ENCODE measurements at regions of chr4 and their contacts with region 1.

Region 1: DNA sequence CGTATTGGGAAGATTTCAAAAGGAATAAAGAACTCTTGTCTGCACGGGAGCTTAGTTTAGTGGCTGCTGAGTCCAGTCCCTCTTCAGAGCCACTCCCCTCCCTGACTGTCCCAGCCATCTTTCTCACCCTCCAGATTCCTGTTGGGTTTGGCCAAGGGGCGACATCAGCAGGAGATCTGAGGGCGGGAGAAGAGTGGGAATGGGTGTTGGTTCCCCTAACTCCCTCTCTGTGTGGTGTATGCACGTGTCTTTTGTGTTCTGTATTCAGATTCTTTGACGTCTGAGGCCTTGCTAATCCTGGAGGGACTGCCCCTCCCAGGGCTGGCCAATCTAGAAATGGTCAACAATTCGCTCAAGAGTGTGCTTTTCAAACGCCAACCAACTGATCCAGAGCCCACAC is 37.4 kb downstream of the CYTL1 start:
- DNase-seq: no peak
- ATAC-seq: no peak
- H3K4me3 ChIP-seq: no peak overlapping the region
- H3K4me3 Mint-ChIP-seq: no peak overlapping the region
- H3K27ac ChIP-seq: no peak overlapping the region
- H3K27ac Mint-ChIP-seq: no peak overlapping the region
- H3K4me1 ChIP-seq: no peaks in the 10 kb centered on the region
- H3K4me1 Mint-ChIP-seq: no peaks in the 10 kb centered on the region
- H3K27me3 ChIP-seq: no peaks in the 10 kb centered on the region
- H3K27me3 Mint-ChIP-seq: no peaks in the 10 kb centered on the region
- CTCF ChIP-seq: no peak

Region 2: GRCh38 chr4:4913147-4913561 is 68.7 kb before region 1 on chr4:
- CTCF ChIA-PET with region 1: no interaction called
- POLR2A ChIA-PET with region 1: no interaction called
- intact Hi-C with region 1: loop called in 1 of 2 experiments (anchors 2 kb)
- DNase-seq: no peak
- ATAC-seq: no peak
- H3K4me3 ChIP-seq: no peak overlapping the region
- H3K4me3 Mint-ChIP-seq: no peak overlapping the region
- H3K27ac ChIP-seq: no peak overlapping the region
- H3K27ac Mint-ChIP-seq: no peak overlapping the region
- H3K4me1 ChIP-seq: no peaks in the 10 kb centered on the region
- H3K4me1 Mint-ChIP-seq: no peaks in the 10 kb centered on the region
- H3K27me3 ChIP-seq: no peaks in the 10 kb centered on the region
- H3K27me3 Mint-ChIP-seq: no peaks in the 10 kb centered on the region
- CTCF ChIP-seq: no peak

Region 3: DNA sequence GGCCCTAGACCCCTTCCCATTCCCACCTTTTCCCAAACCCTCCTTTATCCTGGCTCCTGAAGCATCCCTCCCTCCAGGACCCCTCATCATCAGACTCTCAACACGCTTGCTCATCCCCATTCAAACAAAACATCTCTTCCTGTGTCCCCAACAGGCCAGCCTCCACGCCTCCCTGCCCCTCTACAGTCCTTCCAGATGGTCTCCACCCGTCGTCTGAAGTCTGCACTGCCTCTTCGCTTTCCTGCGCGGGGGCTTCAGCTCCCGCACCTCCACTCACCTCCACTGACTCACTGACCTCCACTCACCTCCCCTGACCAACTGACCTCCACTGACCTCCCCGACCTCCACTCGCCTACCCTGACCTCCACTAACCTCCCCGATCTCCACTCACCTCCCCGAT is 1178.7 kb after region 1 on chr4:
- CTCF ChIA-PET with region 1: no interaction called
- POLR2A ChIA-PET with region 1: no interaction called
- intact Hi-C with region 1: no loop called
- DNase-seq: no peak
- ATAC-seq: no peak
- H3K4me3 ChIP-seq: no peak overlapping the region
- H3K4me3 Mint-ChIP-seq: no peak overlapping the region
- H3K27ac ChIP-seq: no peak overlapping the region
- H3K27ac Mint-ChIP-seq: no peak overlapping the region
- H3K4me1 ChIP-seq: no peaks in the 10 kb centered on the region
- H3K4me1 Mint-ChIP-seq: peaks cover 2% of the 10 kb centered on the region
- H3K27me3 ChIP-seq: no peaks in the 10 kb centered on the region
- H3K27me3 Mint-ChIP-seq: no peaks in the 10 kb centered on the region
- CTCF ChIP-seq: no peak